Activated naive CD4-positive, alpha-beta T cell treated with anti-CD3 and anti-CD28 coated beads, Interleukin-2, amount 10 ng/mL, durations not matched to agents 7 days and 5 days (primary cell): ENCODE measurements at regions of chr14 and their contacts with region 1.

Region 1: DNA sequence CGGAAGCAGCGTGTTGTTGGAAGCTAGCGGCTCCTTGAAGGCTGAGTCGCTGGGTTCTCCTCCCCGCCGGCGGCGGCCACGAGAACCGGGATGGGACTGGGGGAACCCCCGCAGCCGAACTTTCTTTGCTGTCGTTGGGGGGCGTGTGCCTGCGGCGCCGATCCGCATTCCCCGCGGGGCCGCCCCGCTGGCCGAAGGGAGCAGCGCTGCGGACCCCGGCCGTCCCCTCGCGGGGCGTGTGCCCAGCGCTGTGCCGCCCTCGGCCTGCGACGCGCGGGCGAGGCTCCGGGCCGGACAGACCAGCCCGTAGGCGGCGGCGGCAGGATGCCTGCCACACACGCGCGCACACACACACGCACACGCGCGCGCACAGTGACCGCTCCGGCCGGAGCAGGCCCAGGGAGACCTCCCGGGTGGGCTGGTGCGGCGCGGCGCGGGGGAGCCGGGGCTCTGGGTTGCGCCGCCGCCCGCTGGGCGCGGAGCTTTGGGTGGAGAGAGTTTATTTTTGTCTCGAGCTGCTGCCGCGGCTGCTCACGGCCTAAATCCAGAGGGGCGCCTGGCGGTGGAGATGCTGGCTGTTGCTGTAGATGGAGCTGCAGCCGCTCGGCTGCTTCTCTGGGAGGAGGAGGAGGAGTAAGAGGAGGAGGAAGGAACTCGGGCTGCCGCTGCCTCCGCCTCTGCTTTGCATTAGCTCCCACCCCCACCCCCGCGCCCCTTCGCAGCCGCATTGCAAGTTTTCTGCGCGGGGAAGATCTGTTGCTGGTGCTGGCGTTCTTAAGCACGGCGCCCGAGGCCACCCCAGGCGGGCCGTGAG is at the start of gene SAMD4A:
- DNase-seq: peak; percentile 72
- H3K4me3 Mint-ChIP-seq: peak within 1 kb of the TSS; percentile 89
- H3K27ac Mint-ChIP-seq: peak within 1 kb of the TSS; percentile 69
- H3K4me1 Mint-ChIP-seq: peaks cover 21% of the 10 kb centered on the region
- H3K27me3 Mint-ChIP-seq: peaks cover 49% of the 10 kb centered on the region

Region 2: DNA sequence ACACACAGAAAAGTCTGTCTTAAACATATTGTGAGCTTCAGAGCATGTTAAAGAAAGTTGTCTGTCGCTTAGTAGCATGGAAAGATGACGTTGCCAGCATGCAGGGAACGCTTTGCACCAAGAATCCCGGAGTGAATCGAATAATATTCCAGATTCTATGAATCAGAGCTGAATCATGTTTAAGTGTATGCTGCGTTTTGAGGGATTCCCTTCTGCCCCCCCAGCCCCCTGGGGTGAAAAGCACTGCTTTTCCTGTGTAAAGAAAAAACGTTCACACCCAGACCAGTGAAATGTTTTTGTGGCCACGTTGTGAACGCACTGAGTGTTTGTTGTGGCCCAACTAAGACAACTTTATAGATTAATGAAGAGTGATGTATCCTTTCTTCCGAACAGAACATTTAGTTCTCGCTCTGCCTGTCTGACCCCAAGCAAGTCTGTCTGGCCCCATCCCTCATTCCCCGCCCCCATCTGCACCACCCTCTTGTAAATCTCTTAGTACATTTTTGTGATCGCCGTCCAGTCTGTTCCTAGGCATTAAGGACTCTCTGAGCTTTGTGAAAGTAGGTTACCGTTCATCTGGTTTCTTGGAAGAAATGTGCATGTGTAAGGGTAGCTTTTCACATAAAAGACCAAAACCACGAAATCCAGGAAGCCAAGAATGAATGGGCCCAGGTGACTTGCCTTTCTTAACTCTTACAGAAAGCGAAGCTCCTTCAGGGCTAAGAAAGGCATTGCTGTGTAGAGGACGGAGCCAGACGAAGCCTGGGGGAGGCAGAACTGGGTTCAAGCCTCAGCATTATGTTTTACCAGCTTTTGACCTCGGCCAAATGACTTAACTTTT is 103.3 kb after region 1 on chr14:
- CTCF ChIA-PET with region 1: interaction called, 21 read pairs
- DNase-seq: peak; percentile 32
- H3K4me3 Mint-ChIP-seq: no peak overlapping the region
- H3K27ac Mint-ChIP-seq: peak overlapping the region; percentile 51
- H3K4me1 Mint-ChIP-seq: peaks cover 33% of the 10 kb centered on the region
- H3K27me3 Mint-ChIP-seq: peaks cover 22% of the 10 kb centered on the region

Region 3: GRCh38 chr14:54691525-54692283 is 125.1 kb after region 1 on chr14:
- CTCF ChIA-PET with region 1: interaction called, 23 read pairs
- DNase-seq: peak; percentile 59
- H3K4me3 Mint-ChIP-seq: no peak overlapping the region
- H3K27ac Mint-ChIP-seq: no peak overlapping the region
- H3K4me1 Mint-ChIP-seq: no peaks in the 10 kb centered on the region
- H3K27me3 Mint-ChIP-seq: peaks cover 32% of the 10 kb centered on the region

Region 4: DNA sequence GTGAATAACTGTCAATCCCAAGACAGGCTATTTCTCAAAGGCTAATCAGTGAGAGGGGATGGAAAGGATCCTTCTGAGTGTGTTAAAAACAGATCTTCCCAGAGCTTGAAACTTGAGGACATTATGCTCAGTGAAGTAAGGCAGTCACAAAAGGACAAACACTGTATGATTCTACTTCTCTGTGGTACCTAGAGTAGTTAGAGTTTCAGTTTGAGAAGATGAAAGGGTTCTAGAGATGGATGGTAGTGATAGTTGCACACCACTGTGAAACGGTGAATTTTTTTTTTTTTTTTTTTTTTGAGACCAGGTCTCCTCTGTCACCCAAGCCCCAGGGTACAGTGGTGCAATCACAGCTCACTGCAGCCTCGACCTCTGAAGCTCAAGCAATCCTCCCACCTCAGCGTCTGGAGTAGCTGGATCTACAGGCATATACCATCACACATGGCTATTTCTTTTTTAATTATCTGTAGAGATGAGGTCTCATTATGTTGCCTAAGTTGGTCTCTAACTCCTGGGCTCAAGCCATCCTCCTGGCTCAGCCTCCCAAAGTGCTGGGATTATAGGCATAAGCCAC is 134.2 kb after region 1 on chr14:
- CTCF ChIA-PET with region 1: interaction called, 11 read pairs
- DNase-seq: no peak
- H3K4me3 Mint-ChIP-seq: no peak overlapping the region
- H3K27ac Mint-ChIP-seq: no peak overlapping the region
- H3K4me1 Mint-ChIP-seq: peaks cover 13% of the 10 kb centered on the region
- H3K27me3 Mint-ChIP-seq: peaks cover 41% of the 10 kb centered on the region

Region 5: DNA sequence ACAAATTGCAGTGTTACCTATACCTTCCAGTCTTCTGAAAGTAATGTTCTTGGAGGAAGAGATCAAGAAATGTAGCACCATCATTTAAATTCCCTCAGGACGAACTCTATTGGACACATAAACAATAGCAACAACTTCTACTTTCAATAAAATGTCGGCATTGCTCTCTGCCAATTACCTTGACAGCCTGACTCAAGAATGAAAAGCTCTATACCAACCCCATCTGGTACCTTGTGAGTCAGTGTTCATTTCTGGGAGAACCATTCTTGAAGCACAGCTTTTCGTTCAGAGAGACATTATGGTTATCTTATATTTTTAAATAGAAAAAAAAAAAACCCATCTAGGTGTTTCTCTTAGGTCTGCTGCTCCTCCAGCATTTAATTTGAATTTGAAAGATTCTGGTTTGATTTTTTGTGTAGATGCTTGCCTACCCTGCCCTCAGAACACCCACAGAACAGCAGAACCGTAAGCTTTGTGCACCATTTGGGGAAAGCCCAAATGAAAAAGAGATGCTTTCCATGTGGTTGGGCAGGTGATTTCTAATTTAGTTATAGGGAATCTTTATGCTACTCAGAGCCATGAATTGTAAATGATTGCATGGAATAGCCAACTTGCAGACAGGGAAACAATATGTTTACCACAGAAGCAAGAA is 156.3 kb after region 1 on chr14:
- CTCF ChIA-PET with region 1: interaction called, 31 read pairs
- DNase-seq: peak; percentile 33
- H3K4me3 Mint-ChIP-seq: no peak overlapping the region
- H3K27ac Mint-ChIP-seq: no peak overlapping the region
- H3K4me1 Mint-ChIP-seq: peaks cover 14% of the 10 kb centered on the region
- H3K27me3 Mint-ChIP-seq: peaks cover 28% of the 10 kb centered on the region

Region 6: GRCh38 chr14:54805521-54806322 is 239.1 kb after region 1 on chr14:
- CTCF ChIA-PET with region 1: interaction called, 49 read pairs
- DNase-seq: peak; percentile 85
- H3K4me3 Mint-ChIP-seq: no peak overlapping the region
- H3K27ac Mint-ChIP-seq: no peak overlapping the region
- H3K4me1 Mint-ChIP-seq: peaks cover 4% of the 10 kb centered on the region
- H3K27me3 Mint-ChIP-seq: peaks cover 56% of the 10 kb centered on the region